PC-3 (cell line): ENCODE measurements at regions of chr18 and their contacts with region 1.

Region 1: DNA sequence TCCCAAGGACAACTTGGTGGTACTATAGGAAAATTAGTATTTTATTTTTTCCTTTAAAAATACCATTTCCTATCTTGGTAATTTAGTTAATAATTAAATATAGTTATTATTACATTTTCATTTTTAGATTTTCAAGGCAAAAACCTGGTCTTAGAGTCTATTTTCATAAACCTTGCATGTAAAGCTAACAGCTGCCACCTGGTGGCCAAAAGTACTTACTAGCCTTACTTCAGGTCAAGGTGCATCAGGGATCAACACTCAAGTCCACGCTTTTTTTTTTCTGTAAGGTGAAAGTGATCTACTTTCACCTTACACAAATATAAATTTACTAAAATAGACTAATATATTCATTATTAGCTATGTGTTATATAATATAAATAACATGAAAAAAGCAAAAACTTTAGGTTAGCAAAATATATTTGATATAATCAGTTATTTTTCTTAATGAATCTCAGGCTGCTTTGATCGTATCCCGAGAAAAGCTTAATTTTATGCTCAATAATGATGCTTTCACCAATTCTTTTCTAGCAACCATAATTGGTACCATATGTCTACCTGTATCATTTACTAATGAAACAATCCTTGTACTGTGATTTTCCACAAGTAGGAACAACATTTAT is 62.5 kb downstream of the RELCH start:
- DNase-seq: peak; percentile 84
- ATAC-seq: peak; percentile 70
- H3K4me3 ChIP-seq: no peak overlapping the region
- H3K27ac ChIP-seq: no peak overlapping the region
- H3K4me1 ChIP-seq: no peaks in the 10 kb centered on the region
- H3K27me3 ChIP-seq: no peaks in the 10 kb centered on the region
- CTCF ChIP-seq: peak; percentile 60

Region 2: DNA sequence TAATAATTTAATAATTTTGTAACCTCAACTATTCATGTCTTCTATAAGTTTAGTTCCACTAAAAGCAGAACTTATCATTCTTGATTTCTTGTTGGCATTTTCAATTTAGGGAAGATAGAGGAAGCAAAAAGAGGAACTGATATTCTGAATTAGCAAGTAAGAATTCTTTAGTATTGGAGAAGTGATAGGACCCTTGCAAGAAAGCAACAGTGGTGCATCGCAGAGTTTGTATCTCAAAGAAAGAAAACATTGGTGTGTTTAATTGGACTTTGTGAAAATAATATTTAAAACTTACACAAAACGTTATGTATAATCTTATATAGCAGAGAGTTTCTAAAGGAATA is 39.0 kb after region 1 on chr18:
- CTCF ChIA-PET with region 1: no interaction called
- POLR2A ChIA-PET with region 1: no interaction called
- intact Hi-C with region 1: loop called (anchors 2 kb)
- DNase-seq: no peak
- ATAC-seq: no peak
- H3K4me3 ChIP-seq: no peak overlapping the region
- H3K27ac ChIP-seq: peak overlapping the region; percentile 28
- H3K4me1 ChIP-seq: peaks cover 26% of the 10 kb centered on the region
- H3K27me3 ChIP-seq: no peaks in the 10 kb centered on the region
- CTCF ChIP-seq: no peak